Activated B cell treated with CpG ODN at 0.5 μM for 24 hours (primary cell): ENCODE measurements at regions of chr11 and their contacts with region 1.

Region 1: DNA sequence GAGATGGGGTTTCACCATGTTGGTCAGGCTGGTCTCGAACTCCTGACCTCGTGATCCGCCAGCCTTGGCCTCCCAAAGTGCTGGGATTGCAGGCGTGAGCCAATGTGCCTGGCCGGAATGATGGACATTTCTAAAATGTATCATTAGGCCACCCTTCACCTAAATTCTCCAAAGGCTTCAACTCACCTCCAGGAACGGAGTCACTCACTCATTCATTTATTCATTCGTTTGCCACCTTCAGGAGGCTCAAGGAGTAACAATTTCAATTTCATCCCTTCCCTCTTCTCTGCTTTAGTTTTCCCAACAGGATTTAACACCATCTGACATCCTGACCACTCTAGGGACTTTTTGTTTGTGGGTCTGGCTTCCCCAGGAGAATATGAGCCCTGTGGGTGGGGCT is 5.4 kb downstream of the BATF2 start:
- DNase-seq: no peak
- ATAC-seq: no peak
- H3K4me3 Mint-ChIP-seq: no peak overlapping the region
- H3K27ac Mint-ChIP-seq: no peak overlapping the region
- H3K4me1 Mint-ChIP-seq: peaks cover 48% of the 10 kb centered on the region
- H3K27me3 Mint-ChIP-seq: no peaks in the 10 kb centered on the region
- CTCF ChIP-seq: no peak

Region 2: GRCh38 chr11:64545605-64546004 is 445.7 kb before region 1 on chr11:
- CTCF ChIA-PET with region 1: no interaction called
- POLR2A ChIA-PET with region 1: interaction called, 13 read pairs
- intact Hi-C with region 1: no loop called
- DNase-seq: no peak
- ATAC-seq: no peak
- H3K4me3 Mint-ChIP-seq: no peak overlapping the region
- H3K27ac Mint-ChIP-seq: no peak overlapping the region
- H3K4me1 Mint-ChIP-seq: no peaks in the 10 kb centered on the region
- H3K27me3 Mint-ChIP-seq: peaks cover 10% of the 10 kb centered on the region
- CTCF ChIP-seq: no peak